Left lung (tissue), 14 donors: ENCODE measurements at regions of chr18 and their contacts with region 1.

Region 1: DNA sequence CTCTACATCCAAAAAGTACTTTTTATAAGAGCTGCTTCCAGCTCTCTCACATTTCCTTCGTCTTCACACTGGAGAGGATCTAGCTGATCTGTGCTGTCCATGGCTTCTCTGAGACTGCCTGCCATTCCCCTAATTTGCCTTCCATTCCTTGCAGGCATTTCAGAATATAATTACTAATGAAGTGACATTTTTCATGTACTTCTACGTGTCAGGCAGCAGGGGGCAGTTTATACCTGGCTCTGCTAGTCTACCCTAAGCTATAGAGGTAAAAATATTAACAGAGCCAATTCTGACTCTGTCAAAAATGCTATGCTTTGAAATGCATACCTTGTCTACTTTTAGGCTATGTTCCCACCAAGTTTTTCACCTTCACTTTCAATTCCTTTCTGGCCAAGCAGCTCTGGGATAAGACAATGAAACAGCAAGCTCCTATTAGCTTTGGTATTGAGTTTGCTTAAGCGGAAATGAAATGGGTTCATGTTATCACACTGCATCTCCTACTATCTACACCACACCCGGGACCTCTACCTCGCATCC is 81.9 kb downstream of the MEP1B start:
- DNase-seq: peak in 1 of 4 donors; percentile 44
- ATAC-seq: peak; percentile 82
- H3K4me3 ChIP-seq: no peak overlapping the region
- H3K27ac ChIP-seq: no peak overlapping the region
- H3K4me1 ChIP-seq: no peaks in the 10 kb centered on the region
- H3K27me3 ChIP-seq: no peaks in the 10 kb centered on the region
- CTCF ChIP-seq: peak; percentile 29 to 42

Region 2: GRCh38 chr18:32122039-32122438 is 149.7 kb before region 1 on chr18:
- intact Hi-C with region 1: no loop called
- DNase-seq: no peak
- ATAC-seq: no peak
- H3K4me3 ChIP-seq: no peak overlapping the region
- H3K27ac ChIP-seq: no peak overlapping the region
- H3K4me1 ChIP-seq: no peaks in the 10 kb centered on the region
- H3K27me3 ChIP-seq: no peaks in the 10 kb centered on the region
- CTCF ChIP-seq: no peak

Region 3: DNA sequence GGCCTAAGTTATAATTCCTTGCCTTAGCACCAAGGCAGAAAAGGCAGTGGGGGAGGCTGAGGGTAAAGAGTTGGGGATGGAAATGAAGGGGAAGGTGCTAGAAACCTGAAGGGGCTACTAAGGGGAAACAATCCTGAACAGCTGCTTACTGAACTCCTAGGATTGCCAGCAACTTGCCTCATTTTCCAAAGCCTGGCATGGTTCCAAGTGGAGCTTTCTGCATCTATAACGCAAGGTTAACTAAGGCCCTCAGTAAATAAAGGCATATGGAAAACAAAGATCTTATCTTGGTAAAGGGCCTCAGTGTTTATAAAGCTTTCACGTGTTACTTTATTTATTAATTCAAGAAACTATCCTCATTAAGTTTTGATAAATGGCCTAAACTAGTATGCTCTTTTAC is 71.0 kb before region 1 on chr18:
- intact Hi-C with region 1: no loop called
- DNase-seq: peak in 2 of 4 donors; percentile 14 to 19
- ATAC-seq: no peak
- H3K4me3 ChIP-seq: no peak overlapping the region
- H3K27ac ChIP-seq: no peak overlapping the region
- H3K4me1 ChIP-seq: no peaks in the 10 kb centered on the region
- H3K27me3 ChIP-seq: no peaks in the 10 kb centered on the region
- CTCF ChIP-seq: no peak

Region 4: DNA sequence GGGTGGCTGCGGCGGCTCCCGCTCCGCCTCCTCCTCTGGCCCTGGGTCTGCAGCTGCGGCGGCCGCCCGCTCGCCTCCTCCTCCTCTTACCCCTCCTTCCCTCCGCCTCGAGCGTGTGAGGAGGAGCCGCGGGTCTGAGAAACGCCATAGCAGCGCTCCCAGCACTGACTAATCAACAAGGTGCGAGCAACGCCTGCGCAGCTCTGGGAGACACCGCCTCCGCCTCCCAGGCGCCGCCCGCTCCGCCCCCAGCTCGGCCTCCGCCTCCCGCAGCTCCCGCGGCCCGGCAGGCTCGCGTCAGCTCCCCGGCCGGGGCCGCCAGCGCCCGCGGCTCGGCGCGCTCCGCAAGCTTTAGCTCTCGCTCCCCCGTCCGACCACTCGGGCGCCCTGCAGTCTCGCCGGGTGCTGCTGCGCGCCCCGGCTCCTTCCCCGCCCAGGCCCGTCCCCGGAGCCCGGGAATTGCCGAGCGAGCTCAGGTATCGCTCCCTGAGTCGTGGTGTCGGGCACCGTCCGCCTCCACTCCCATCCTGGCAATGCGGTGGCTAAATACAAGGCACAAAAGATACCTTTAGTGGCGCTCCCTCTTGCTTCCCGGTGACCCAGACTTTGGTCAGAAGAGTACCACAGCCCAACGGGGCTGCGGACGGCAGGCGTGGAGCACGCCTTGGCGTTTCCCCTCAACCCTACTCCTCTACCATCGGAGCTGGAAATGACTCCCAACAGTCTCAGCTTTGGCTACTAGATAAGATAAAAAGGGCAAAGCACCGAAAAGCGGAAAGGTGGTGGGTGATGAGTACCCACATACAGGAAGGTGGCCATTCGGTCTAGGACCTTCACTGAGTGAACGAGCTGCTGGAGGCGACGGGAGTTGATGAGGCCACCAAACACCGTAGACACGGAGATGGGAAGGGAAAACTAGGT is 199.2 kb after region 1 on chr18 and contains the start of gene GAREM1:
- intact Hi-C with region 1: loop called in 1 of 2 experiments (anchors 10 kb)
- DNase-seq: peak; percentile 95 to 98 (median 95)
- ATAC-seq: peak; percentile 93
- H3K4me3 ChIP-seq: peak within 1 kb of the TSS; percentile 54 to 62
- H3K27ac ChIP-seq: peak within 1 kb of the TSS; percentile 55 to 67
- H3K4me1 ChIP-seq: peaks cover 0 to 22% of the 10 kb centered on the region in 2 donors
- H3K27me3 ChIP-seq: peaks cover 0 to 67% of the 10 kb centered on the region in 2 donors
- CTCF ChIP-seq: peak; percentile 52 to 60
- polyA plus RNA-seq, gene GAREM1: 11.6 to 20.2 (median 13.6) TPM

Region 5: GRCh38 chr18:32552421-32553030 is 280.8 kb after region 1 on chr18:
- intact Hi-C with region 1: loop called in 1 of 2 experiments (anchors 10 kb)
- DNase-seq: peak in 2 of 4 donors; percentile 35 to 40
- ATAC-seq: peak; percentile 95
- H3K4me3 ChIP-seq: no peak overlapping the region
- H3K27ac ChIP-seq: no peak overlapping the region
- H3K4me1 ChIP-seq: no peaks in the 10 kb centered on the region
- H3K27me3 ChIP-seq: no peaks in the 10 kb centered on the region
- CTCF ChIP-seq: peak; percentile 64 to 76